ENCODE measurements at regions of chr10 and their contacts with region 1.

Region 1: GRCh38 chr10:11515596-11516430 is 95.6 kb downstream of the USP6NL start:
- DNase-seq: peak; percentile 29
- H3K4me3 Mint-ChIP-seq: no peak overlapping the region
- H3K27ac Mint-ChIP-seq: no peak overlapping the region
- H3K4me1 Mint-ChIP-seq: peaks cover 24% of the 10 kb centered on the region
- H3K27me3 Mint-ChIP-seq: peaks cover 35% of the 10 kb centered on the region

Region 2: GRCh38 chr10:11539191-11539868 is 23.5 kb after region 1 on chr10:
- intact Hi-C with region 1: loop called (anchors 1 kb)
- DNase-seq: no peak
- H3K4me3 Mint-ChIP-seq: no peak overlapping the region
- H3K27ac Mint-ChIP-seq: no peak overlapping the region
- H3K4me1 Mint-ChIP-seq: peaks cover 9% of the 10 kb centered on the region
- H3K27me3 Mint-ChIP-seq: peaks cover 12% of the 10 kb centered on the region

Region 3: DNA sequence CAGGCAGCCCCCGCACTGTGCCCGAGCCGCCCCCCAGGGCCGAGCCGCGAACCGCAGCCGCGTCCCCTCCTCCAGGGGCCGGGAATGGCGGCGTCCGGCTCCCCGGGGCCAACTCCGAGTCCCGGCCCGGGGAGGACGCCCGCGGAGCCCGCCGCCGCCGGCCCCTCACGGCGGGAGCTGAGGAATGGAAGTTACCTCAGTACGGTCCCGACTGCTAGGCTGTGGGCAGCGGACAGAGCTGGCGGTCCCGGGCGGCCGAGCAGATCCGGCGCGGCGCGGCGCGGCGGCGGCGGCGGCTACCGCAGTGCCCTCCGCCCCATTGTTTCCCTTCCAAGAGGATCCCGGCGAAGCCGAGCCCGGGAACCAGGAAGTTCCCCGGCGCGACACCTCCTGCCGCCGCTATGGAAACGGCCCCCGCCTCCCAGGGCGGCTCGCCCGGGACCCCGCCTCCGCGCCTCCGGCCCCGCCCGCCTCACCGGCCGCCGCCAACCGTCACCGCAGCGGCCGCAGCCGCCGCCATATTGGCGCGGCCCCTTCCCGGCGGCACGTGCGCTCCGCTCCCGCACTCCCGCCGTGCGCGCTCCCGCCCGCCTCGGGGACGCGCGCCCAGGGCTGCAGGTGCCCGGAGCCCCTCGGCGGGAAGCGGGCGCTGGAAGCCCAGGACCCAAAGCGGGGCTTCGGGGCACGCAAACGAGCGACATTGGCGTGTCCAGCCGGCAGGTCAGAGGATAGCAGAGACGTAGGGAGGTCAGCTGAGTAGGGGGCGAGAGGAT is 95.6 kb after region 1 on chr10 and contains the start of gene USP6NL:
- intact Hi-C with region 1: loop called (anchors 1 kb)
- DNase-seq: peak; percentile 48
- H3K4me3 Mint-ChIP-seq: peak within 1 kb of the TSS; percentile 89
- H3K27ac Mint-ChIP-seq: peak within 1 kb of the TSS; percentile 52
- H3K4me1 Mint-ChIP-seq: peaks cover 27% of the 10 kb centered on the region
- H3K27me3 Mint-ChIP-seq: peaks cover 44% of the 10 kb centered on the region
- total RNA-seq, gene USP6NL: 0.64 and 0.78 TPM in 2 replicates

Region 4: GRCh38 chr10:11713186-11713743 is 197.5 kb after region 1 on chr10:
- intact Hi-C with region 1: loop called (anchors 1 kb)
- DNase-seq: no peak
- H3K4me3 Mint-ChIP-seq: no peak overlapping the region
- H3K27ac Mint-ChIP-seq: no peak overlapping the region
- H3K4me1 Mint-ChIP-seq: peaks cover 8% of the 10 kb centered on the region
- H3K27me3 Mint-ChIP-seq: peaks cover 76% of the 10 kb centered on the region

Region 5: GRCh38 chr10:11863353-11864109 is 347.7 kb after region 1 on chr10:
- intact Hi-C with region 1: loop called (anchors 1 kb)
- DNase-seq: peak; percentile 74
- H3K4me3 Mint-ChIP-seq: peak overlapping the region; percentile 41
- H3K27ac Mint-ChIP-seq: peak overlapping the region; percentile 52
- H3K4me1 Mint-ChIP-seq: peaks cover 20% of the 10 kb centered on the region
- H3K27me3 Mint-ChIP-seq: peaks cover 70% of the 10 kb centered on the region